Activated B cell treated with CpG ODN at 0.5 μM for 24 hours (primary cell): ENCODE measurements at regions of chr3 and their contacts with region 1.

Region 1: GRCh38 chr3:150925751-150926201 is 20.5 kb upstream of the MINDY4B start:
- DNase-seq: peak; percentile 46
- ATAC-seq: peak; percentile 84
- H3K4me3 Mint-ChIP-seq: peak overlapping the region; percentile 75
- H3K27ac Mint-ChIP-seq: no peak overlapping the region
- H3K4me1 Mint-ChIP-seq: peaks cover 9% of the 10 kb centered on the region
- H3K27me3 Mint-ChIP-seq: peaks cover 12% of the 10 kb centered on the region
- CTCF ChIP-seq: no peak

Region 2: DNA sequence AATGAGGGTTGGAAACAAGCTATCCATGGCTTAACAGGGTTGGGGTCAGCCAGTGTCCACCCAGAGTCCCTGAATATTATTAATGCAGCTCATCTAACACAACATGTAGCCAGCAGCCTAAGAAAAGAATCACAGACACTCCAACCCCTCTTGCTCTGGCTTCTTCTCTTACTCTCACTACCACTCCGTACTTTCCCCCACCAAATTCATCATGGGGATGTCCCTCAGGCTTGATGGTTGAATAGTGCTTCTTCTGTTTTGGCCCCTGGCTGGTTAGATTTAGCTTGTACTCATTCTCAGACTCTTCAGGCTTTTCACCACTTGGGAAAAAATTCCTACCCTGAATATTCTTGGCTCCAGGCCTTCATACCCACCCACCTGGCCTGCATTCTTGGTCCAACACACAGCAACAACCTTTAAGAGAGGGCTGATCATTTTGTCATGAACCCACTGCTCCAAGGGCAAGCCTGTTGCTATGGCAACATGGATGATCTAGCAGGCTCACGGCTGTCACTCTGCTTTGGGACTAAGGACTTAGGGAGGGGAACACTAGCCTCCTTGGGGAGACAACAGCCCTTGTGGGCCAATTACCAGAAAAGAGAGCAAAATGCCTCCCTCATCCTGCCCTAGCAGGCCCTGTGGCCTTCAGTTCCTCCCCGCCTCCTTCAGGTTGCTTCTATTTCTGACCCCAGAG is 150.2 kb after region 1 on chr3:
- CTCF ChIA-PET with region 1: no interaction called
- POLR2A ChIA-PET with region 1: no interaction called
- intact Hi-C with region 1: loop called (anchors 5 kb)
- DNase-seq: no peak
- ATAC-seq: no peak
- H3K4me3 Mint-ChIP-seq: no peak overlapping the region
- H3K27ac Mint-ChIP-seq: no peak overlapping the region
- H3K4me1 Mint-ChIP-seq: no peaks in the 10 kb centered on the region
- H3K27me3 Mint-ChIP-seq: peaks cover 8% of the 10 kb centered on the region
- CTCF ChIP-seq: no peak

Region 3: DNA sequence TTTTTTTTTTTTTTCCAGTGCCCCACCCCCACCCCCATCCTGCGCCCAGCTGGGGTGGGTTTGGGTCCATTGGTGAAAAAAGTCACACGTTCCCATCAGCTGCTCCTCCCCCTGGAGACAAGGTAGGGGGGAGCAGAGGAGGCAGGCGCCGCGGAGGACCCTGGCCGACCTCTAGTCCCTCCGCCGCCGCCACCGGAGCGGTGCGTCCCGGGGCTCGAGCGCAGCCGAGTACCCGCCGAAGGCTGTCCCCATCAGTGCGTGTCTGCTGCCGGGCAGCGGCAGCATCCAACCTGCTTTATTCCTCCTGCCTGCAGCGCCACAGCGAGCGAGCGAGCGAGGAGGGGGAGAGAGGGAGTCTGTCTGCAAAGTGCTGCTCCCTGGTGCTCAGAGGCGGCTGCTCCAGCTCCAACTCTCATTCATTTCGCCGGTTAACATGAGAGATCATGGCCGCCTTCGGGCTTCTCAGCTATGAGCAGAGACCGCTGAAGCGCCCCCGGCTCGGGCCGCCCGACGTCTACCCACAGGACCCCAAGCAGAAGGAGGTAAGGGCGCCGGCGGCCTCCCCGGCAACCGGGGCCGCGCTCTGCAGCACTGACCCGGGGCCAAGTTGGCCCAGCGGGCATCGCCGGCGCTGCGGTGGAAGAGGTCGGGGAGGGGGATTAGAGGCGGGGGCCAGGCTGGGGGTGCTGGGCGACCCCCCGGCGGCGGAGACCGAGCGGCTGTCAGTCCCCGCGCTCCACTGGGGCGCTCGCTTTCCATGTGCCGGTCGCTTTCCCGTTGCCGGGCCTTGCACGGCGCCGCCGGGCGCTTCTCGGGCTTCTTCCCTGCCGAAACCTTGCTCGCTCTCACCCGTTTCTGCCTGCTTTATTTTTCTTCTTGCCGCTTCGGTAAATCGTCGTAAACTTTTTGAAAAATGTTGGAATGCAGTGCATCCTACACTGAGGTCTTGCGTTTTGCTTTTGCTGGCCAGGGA is 161.0 kb after region 1 on chr3:
- CTCF ChIA-PET with region 1: interaction called, 3 read pairs
- POLR2A ChIA-PET with region 1: no interaction called
- intact Hi-C with region 1: loop called (anchors 1 kb)
- DNase-seq: peak; percentile 42
- ATAC-seq: peak; percentile 72
- H3K4me3 Mint-ChIP-seq: peak overlapping the region; percentile 89
- H3K27ac Mint-ChIP-seq: peak overlapping the region; percentile 30
- H3K4me1 Mint-ChIP-seq: peaks cover 11% of the 10 kb centered on the region
- H3K27me3 Mint-ChIP-seq: peaks cover 27% of the 10 kb centered on the region
- CTCF ChIP-seq: no peak

Region 4: DNA sequence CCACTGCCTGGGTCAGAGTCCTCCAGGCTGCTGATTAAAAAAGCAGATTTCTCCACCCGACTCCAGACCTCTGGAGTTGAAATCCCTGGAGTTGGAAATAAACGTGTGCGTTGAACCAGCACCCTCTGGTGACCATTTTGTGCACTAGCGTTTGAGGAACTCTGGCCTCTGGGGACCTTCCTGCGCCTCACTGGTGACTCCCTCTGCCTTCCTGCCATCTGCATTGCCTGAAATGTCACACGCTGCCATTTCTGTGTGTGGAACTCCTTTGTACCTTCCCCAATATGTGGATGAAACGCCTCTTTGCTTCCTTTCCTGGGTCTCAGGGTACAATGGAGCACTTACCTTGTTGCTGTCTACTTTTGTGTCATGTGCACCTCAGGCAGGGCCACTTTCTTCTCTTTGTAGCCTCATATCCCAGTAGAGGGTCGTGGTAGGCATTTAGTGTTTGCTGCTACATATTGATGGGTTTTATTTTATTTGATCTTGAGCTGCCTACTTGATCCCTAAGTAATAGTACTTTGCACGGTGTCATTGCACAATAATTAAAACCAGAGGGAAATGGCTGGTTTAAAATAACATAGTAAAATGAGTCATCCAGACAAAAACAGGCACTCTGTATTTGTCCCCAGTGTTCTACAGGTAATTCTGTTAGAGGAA is 220.4 kb after region 1 on chr3:
- CTCF ChIA-PET with region 1: interaction called, 17 read pairs
- POLR2A ChIA-PET with region 1: no interaction called
- intact Hi-C with region 1: loop called (anchors 1 kb)
- DNase-seq: peak; percentile 36
- ATAC-seq: peak; percentile 99
- H3K4me3 Mint-ChIP-seq: no peak overlapping the region
- H3K27ac Mint-ChIP-seq: no peak overlapping the region
- H3K4me1 Mint-ChIP-seq: peaks cover 4% of the 10 kb centered on the region
- H3K27me3 Mint-ChIP-seq: peaks cover 4% of the 10 kb centered on the region
- CTCF ChIP-seq: peak; percentile 87